PC-3 (cell line): ENCODE measurements at regions of chrX and their contacts with region 1.

Region 1: GRCh38 chrX:153910446-153910845 is 6.0 kb downstream of the AVPR2 start:
- DNase-seq: no peak
- ATAC-seq: peak; percentile 68
- H3K4me3 ChIP-seq: no peak overlapping the region
- H3K27ac ChIP-seq: no peak overlapping the region
- H3K4me1 ChIP-seq: no peaks in the 10 kb centered on the region
- H3K27me3 ChIP-seq: no peaks in the 10 kb centered on the region
- CTCF ChIP-seq: no peak

Region 2: GRCh38 chrX:153878969-153879653 is 31.3 kb before region 1 on chrX:
- CTCF ChIA-PET with region 1: interaction called, 13 read pairs
- POLR2A ChIA-PET with region 1: no interaction called
- intact Hi-C with region 1: no loop called
- DNase-seq: no peak
- ATAC-seq: no peak
- H3K4me3 ChIP-seq: no peak overlapping the region
- H3K27ac ChIP-seq: no peak overlapping the region
- H3K4me1 ChIP-seq: no peaks in the 10 kb centered on the region
- H3K27me3 ChIP-seq: no peaks in the 10 kb centered on the region
- CTCF ChIP-seq: no peak

Region 3: DNA sequence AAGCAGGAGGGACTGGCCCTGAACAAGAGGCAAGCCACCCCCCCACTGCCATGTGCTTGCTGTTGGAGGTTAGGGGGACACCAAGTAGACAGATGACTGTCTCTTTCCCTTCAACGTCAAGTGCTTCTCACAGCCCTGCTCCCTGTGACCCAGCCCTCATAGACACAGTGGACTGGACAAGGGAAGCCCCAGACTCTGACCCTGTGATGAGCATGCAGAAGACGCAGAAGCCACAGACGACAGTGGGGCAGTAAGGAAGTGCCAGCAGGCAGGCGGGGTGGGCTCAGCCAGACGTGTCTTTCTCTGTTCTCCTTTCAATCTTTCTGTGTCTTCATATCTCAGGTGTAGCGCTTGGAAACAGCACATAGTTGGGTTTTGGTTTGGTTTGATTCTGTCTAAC is 22.1 kb before region 1 on chrX:
- CTCF ChIA-PET with region 1: interaction called, 13 read pairs
- POLR2A ChIA-PET with region 1: no interaction called
- intact Hi-C with region 1: no loop called
- DNase-seq: no peak
- ATAC-seq: no peak
- H3K4me3 ChIP-seq: no peak overlapping the region
- H3K27ac ChIP-seq: no peak overlapping the region
- H3K4me1 ChIP-seq: peaks cover 9% of the 10 kb centered on the region; the same call in 1 of the 2 replicates
- H3K27me3 ChIP-seq: peaks cover 6% of the 10 kb centered on the region; the same call in 1 of the 2 replicates
- CTCF ChIP-seq: no peak

Region 4: GRCh38 chrX:154056770-154057241 is 146.4 kb after region 1 on chrX:
- CTCF ChIA-PET with region 1: no interaction called
- POLR2A ChIA-PET with region 1: no interaction called
- intact Hi-C with region 1: no loop called
- DNase-seq: no peak
- ATAC-seq: no peak
- H3K4me3 ChIP-seq: no peak overlapping the region
- H3K27ac ChIP-seq: no peak overlapping the region
- H3K4me1 ChIP-seq: no peaks in the 10 kb centered on the region
- H3K27me3 ChIP-seq: no peaks in the 10 kb centered on the region
- CTCF ChIP-seq: no peak